H1 (cell line): ENCODE measurements at regions of chr2 and their contacts with region 1.

Region 1: DNA sequence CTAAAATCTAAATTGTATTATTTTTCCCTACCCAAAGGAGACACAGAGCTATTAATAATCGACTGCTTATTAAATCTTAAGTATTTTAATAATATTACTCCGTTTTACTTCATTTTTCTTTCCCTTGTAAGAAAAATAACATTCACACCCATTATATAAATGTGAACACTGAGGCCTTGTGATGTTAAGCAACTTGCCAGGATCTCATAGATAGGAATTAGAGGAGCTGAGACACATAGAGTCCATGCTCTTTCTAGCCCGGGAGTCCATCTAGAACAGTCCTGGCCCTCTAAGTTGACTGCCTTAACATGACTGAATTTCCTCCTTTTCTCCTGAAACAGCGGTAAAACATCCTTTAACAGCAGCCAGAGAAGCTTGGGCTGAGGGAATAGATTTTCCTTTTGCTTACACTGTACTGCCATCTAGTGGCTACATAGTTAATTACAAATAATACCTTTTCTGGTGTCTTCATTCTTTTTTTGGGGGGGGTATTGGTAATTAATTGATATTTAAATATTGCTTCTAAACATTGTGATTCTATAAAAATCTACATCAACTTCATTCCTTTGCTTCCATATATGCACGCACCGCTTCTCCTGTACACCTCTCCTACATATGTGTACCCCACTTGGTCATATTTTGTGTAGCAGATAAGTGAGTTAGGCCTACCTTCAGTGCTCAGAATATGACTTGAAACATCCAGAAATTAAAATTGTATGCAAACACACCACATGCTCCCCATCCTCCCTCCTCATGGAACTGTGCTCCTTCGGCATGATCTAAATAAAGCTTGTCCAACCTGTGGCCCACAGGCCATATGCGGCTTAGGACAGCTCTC is 125.8 kb upstream of the HNMT start:
- DNase-seq: no peak
- H3K4me3 ChIP-seq: no peak overlapping the region
- H3K27ac ChIP-seq: no peak overlapping the region
- H3K4me1 ChIP-seq: peaks cover 0 to 6% (median 0%) of the 10 kb centered on the region in 4 experiments; a peak in 2 of 7 replicates
- H3K27me3 ChIP-seq: no peaks in the 10 kb centered on the region
- CTCF ChIP-seq: peak in 2 of 3 experiments; percentile 50 to 53; a peak in 2 of 4 replicates
- EP300 ChIP-seq: no peak
- POLR2A ChIP-seq: no peak
- RAD21 ChIP-seq: peak; percentile 93 to 97

Region 2: DNA sequence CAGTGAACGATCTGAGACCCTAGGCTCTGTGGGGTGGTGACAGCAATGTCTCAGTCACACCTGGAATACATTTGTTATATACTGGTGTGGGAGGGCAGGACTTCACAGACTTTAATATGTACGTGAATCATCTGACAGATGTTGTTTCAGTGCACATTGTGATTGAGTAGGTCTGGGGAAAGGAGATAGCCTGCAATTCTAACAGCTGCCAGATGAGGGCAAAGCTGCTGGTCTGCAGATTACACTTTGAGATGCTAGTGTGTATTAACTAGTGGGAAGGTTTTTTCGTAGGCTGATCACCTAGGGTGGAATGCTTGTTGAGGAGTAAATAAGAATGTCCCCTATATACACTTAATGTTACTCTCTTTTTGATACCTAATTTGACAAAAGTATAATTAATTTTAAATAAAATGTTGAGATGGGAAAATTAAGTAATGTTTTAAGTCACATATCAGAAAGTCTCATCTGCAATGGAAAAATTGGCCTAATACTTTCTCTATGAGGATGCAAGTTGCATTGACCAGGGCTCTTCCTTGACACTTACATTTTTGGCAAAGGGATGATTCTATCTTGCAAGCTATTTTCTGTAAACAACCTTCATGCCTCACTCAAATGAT is 371.1 kb before region 1 on chr2:
- CTCF ChIA-PET with region 1: interaction called, 23 read pairs
- POLR2A ChIA-PET with region 1: no interaction called
- DNase-seq: peak; percentile 3 to 75
- H3K4me3 ChIP-seq: no peak overlapping the region
- H3K27ac ChIP-seq: no peak overlapping the region
- H3K4me1 ChIP-seq: peaks cover 0 to 2% (median 1%) of the 10 kb centered on the region in 4 experiments; a peak in 1 of 7 replicates
- H3K27me3 ChIP-seq: no peaks in the 10 kb centered on the region
- CTCF ChIP-seq: peak in 2 of 3 experiments; percentile 60 to 86; a peak in 3 of 4 replicates
- EP300 ChIP-seq: no peak
- POLR2A ChIP-seq: no peak
- RAD21 ChIP-seq: peak; percentile 72 to 78

Region 3: GRCh38 chr2:137826373-137827372 is 11.8 kb before region 1 on chr2:
- CTCF ChIA-PET with region 1: interaction called, 39 read pairs
- POLR2A ChIA-PET with region 1: no interaction called
- DNase-seq: no peak
- H3K4me3 ChIP-seq: no peak overlapping the region
- H3K27ac ChIP-seq: no peak overlapping the region
- H3K4me1 ChIP-seq: peaks cover 0 to 5% (median 1%) of the 10 kb centered on the region in 4 experiments; a peak in 4 of 7 replicates
- H3K27me3 ChIP-seq: no peaks in the 10 kb centered on the region
- CTCF ChIP-seq: no peak
- EP300 ChIP-seq: no peak
- POLR2A ChIP-seq: no peak
- RAD21 ChIP-seq: no peak

Region 4: GRCh38 chr2:138060301-138060635 is 221.8 kb after region 1 on chr2:
- CTCF ChIA-PET with region 1: no interaction called
- POLR2A ChIA-PET with region 1: no interaction called
- DNase-seq: no peak
- H3K4me3 ChIP-seq: no peak overlapping the region
- H3K27ac ChIP-seq: no peak overlapping the region
- H3K4me1 ChIP-seq: no peaks in the 10 kb centered on the region
- H3K27me3 ChIP-seq: no peaks in the 10 kb centered on the region
- CTCF ChIP-seq: no peak
- EP300 ChIP-seq: no peak
- POLR2A ChIP-seq: no peak
- RAD21 ChIP-seq: no peak